Caco-2 (cell line): ENCODE measurements at regions of chr22 and their contacts with region 1.

Region 1: GRCh38 chr22:20803696-20804324 is 29.9 kb downstream of the SERPIND1 start:
- DNase-seq: peak; percentile 53 to 71
- H3K4me3 ChIP-seq: no peak overlapping the region
- H3K4me3 Mint-ChIP-seq: no peak overlapping the region
- H3K27ac Mint-ChIP-seq: peak overlapping the region; percentile 13
- H3K4me1 ChIP-seq: no peaks in the 10 kb centered on the region
- H3K4me1 Mint-ChIP-seq: no peaks in the 10 kb centered on the region
- H3K27me3 ChIP-seq: no peaks in the 10 kb centered on the region
- H3K27me3 Mint-ChIP-seq: no peaks in the 10 kb centered on the region
- CTCF ChIP-seq: peak; percentile 54 to 77

Region 2: DNA sequence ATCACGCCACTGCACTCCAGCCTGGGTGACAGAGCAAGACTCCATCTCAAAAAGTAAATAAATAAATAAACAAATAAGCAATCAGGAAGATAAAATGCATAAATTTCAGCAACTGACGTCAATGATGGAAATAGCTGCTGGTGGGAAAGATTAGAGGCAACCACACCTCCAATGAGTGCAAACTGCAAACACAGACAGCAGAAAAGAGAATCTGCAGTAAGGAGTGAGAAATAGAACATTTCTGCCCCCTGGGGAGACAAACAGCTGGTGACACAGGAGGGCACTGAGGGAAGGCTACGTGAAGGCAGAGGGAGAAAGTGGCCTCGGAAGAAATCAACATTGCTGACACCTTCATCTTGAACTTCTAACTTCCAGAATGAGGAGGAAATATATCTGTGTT is 48.3 kb after region 1 on chr22:
- CTCF ChIA-PET with region 1: interaction called, 4 read pairs
- POLR2A ChIA-PET with region 1: no interaction called
- intact Hi-C with region 1: loop called (anchors 5 kb)
- DNase-seq: no peak
- H3K4me3 ChIP-seq: no peak overlapping the region
- H3K4me3 Mint-ChIP-seq: no peak overlapping the region
- H3K27ac Mint-ChIP-seq: no peak overlapping the region
- H3K4me1 ChIP-seq: peaks cover 6% of the 10 kb centered on the region
- H3K4me1 Mint-ChIP-seq: peaks cover 19% of the 10 kb centered on the region
- H3K27me3 ChIP-seq: no peaks in the 10 kb centered on the region
- H3K27me3 Mint-ChIP-seq: no peaks in the 10 kb centered on the region
- CTCF ChIP-seq: no peak

Region 3: GRCh38 chr22:20949698-20950183 is 145.9 kb after region 1 on chr22:
- CTCF ChIA-PET with region 1: no interaction called
- POLR2A ChIA-PET with region 1: no interaction called
- intact Hi-C with region 1: no loop called
- DNase-seq: no peak
- H3K4me3 ChIP-seq: no peak overlapping the region
- H3K4me3 Mint-ChIP-seq: no peak overlapping the region
- H3K27ac Mint-ChIP-seq: peak overlapping the region; percentile 88
- H3K4me1 ChIP-seq: peaks cover 61% of the 10 kb centered on the region
- H3K4me1 Mint-ChIP-seq: peaks cover 19% of the 10 kb centered on the region
- H3K27me3 ChIP-seq: no peaks in the 10 kb centered on the region
- H3K27me3 Mint-ChIP-seq: no peaks in the 10 kb centered on the region
- CTCF ChIP-seq: no peak